ENCODE measurements at regions of chr4 and their contacts with region 1.

Region 1: GRCh38 chr4:141524116-141524515 is 112.3 kb upstream of the IL15 start:
- DNase-seq: no peak
- ATAC-seq: no peak

Region 2: DNA sequence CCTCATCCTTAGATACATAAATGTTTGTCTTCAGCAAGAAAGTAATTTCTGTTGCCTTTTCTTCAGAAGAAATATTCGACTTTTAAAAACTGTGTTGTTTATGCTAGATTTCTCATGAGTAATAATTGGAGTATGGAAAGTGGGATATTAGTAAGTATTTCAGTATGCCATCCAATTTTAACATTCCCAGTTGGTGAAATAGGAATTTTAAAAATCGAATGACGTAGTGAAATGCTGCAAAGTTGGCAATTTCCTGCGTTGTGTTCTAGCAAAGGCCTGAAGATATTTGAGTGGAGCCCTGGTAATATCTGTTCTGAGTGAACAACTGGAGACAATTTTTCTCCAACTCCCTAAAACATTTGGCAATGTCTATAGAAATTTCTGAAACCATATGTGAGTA is 113.3 kb before region 1 on chr4:
- intact Hi-C with region 1: no loop called
- DNase-seq: no peak
- ATAC-seq: no peak

Region 3: DNA sequence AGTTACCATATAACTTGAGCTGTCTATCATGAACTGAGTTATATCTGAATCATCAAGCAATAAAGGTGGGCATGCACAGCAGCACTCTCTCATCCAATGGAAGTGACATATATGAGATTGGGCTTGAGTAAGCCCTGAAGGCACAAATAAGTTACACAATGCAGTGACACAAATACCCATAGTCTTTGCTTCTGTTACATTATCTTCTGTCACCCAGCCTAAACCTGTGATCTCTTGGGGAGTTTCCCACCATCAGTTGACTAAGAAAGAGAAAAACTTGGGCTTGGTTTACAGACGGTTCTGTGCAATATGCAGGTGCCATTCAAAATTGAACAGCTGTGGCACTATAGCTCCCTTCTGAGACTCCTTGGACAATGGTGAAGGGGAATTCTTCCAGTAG is 26.5 kb before region 1 on chr4:
- intact Hi-C with region 1: loop called (anchors 1 kb)
- DNase-seq: no peak
- ATAC-seq: no peak

Measured in sciatic nerve (tissue), 2 donors.